HCT116 (cell line): ENCODE measurements at regions of chr3 and their contacts with region 1.

Region 1: DNA sequence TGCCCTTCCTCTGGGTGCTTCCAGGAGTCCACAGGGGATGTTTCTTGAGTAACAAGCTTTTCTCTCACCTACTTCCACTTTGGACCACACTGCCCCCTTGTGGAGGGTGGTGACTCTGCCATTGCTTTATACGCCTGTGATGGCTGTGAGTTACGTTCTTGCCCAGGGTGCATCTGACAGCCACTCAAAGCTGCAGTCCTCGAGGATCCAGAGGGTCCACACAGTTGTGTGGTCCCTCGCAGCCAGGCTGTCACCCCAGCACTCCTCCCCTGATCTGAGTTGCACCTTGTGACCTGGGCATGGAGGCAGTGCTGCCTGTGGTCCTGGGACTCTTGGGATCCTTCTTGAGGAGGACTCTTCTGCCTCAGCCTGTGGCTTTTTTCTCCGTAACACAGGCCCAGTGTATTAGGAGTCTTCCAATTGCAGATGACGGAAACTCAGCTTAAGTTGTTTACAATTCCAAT is 23.4 kb downstream of the FOXL2 start:
- DNase-seq: peak; percentile 82
- ATAC-seq: peak; percentile 83
- H3K4me3 ChIP-seq: 0 out of 4 replicates have a peak overlapping the region, but pooled peaks of 1 of the 2 experiments have one; percentile 25
- H3K27ac ChIP-seq: no peak overlapping the region
- H3K4me1 ChIP-seq: peaks cover 16 to 20% of the 10 kb centered on the region in 2 experiments
- H3K27me3 ChIP-seq: no peaks in the 10 kb centered on the region
- CTCF ChIP-seq: peak in 2 of 3 experiments; percentile 93 to 94; a peak in 4 of 6 replicates
- POLR2A ChIP-seq: no peak
- RAD21 ChIP-seq: no peak

Region 2: GRCh38 chr3:138417559-138417982 is 506.0 kb before region 1 on chr3:
- CTCF ChIA-PET with region 1: interaction called, 15 read pairs
- POLR2A ChIA-PET with region 1: no interaction called
- RAD21 ChIA-PET with region 1: no interaction called
- intact Hi-C with region 1: loop called (anchors 1 kb)
- DNase-seq: peak; percentile 77
- ATAC-seq: peak; percentile 99
- H3K4me3 ChIP-seq: no peak overlapping the region
- H3K27ac ChIP-seq: no peak overlapping the region
- H3K4me1 ChIP-seq: peaks cover 0 to 4% of the 10 kb centered on the region in 2 experiments; a peak in 1 of 4 replicates
- H3K27me3 ChIP-seq: no peaks in the 10 kb centered on the region
- CTCF ChIP-seq: peak; percentile 90 to 98 (median 98)
- POLR2A ChIP-seq: no peak
- RAD21 ChIP-seq: peak; percentile 89

Region 3: GRCh38 chr3:138479438-138479863 is 444.1 kb before region 1 on chr3:
- CTCF ChIA-PET with region 1: interaction called, 32 read pairs
- POLR2A ChIA-PET with region 1: no interaction called
- RAD21 ChIA-PET with region 1: interaction called in 1 of 2 experiments, 4 read pairs
- intact Hi-C with region 1: loop called (anchors 2 kb)
- DNase-seq: peak; percentile 35
- ATAC-seq: peak; percentile 87
- H3K4me3 ChIP-seq: no peak overlapping the region
- H3K27ac ChIP-seq: no peak overlapping the region
- H3K4me1 ChIP-seq: no peaks in the 10 kb centered on the region
- H3K27me3 ChIP-seq: no peaks in the 10 kb centered on the region
- CTCF ChIP-seq: peak; percentile 65 to 97 (median 91); a peak in 5 of 6 replicates
- POLR2A ChIP-seq: no peak
- RAD21 ChIP-seq: peak; percentile 80

Region 4: GRCh38 chr3:138694287-138695007 is 229.1 kb before region 1 on chr3:
- CTCF ChIA-PET with region 1: interaction called, 24 read pairs
- POLR2A ChIA-PET with region 1: no interaction called
- RAD21 ChIA-PET with region 1: interaction called, 3 to 6 read pairs
- intact Hi-C with region 1: loop called (anchors 2 kb)
- DNase-seq: peak; percentile 47
- ATAC-seq: peak; percentile 84
- H3K4me3 ChIP-seq: no peak overlapping the region
- H3K27ac ChIP-seq: peak overlapping the region; percentile 44; the same call in 1 of the 2 replicates
- H3K4me1 ChIP-seq: peaks cover 13 to 14% of the 10 kb centered on the region in 2 experiments
- H3K27me3 ChIP-seq: no peaks in the 10 kb centered on the region
- CTCF ChIP-seq: no peak
- POLR2A ChIP-seq: no peak
- RAD21 ChIP-seq: no peak

Region 5: DNA sequence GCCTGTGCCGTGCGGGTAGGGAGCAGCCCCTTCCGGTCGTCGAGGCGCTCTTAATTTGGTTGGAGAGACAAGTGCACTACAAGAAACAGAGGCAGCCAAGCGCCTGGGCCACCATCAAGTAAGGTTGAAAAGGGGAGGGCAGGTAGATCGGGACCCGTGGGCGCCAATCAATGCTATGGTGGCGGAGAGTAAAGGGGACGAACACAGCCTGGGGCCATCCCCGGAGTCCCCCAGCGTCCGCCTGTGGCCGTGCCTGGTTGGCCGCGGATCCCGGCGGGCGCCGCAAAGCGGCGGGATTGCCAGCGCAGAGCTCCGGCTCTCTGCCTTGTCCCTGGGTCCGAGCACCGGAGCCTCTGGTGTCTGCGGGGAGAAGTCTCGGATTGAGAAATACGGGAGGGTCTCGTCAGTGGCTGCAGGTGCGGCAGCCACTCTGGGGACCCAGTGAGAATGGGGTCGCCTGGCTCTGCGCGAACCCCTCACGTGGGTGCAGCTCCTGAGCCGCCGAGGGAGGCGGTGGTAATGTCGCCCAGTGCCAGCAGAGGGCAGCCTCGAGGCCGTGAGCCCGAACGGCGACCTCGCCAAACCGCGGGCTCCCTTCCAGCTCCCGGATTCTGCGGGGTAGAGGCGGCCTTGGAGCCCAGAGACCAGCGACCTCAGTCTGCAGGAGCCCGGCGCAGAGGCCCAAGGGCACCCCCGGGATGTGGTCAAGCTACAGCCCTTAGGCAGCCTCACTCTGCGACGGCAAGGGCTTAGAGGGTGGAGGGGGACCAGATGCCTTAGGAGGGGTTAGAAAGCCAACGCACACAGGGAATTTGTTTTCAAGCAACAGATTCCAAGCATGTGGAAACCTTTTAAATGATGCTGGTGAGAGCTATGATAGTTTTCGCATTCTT is 12.5 kb after region 1 on chr3:
- CTCF ChIA-PET with region 1: interaction called, 82 read pairs
- POLR2A ChIA-PET with region 1: interaction called, 3 read pairs
- RAD21 ChIA-PET with region 1: interaction called in 1 of 2 experiments, 3 read pairs
- intact Hi-C with region 1: no loop called
- DNase-seq: peak; percentile 52
- ATAC-seq: peak; percentile 88
- H3K4me3 ChIP-seq: peak overlapping the region; percentile 43 to 68
- H3K27ac ChIP-seq: peak overlapping the region; percentile 21
- H3K4me1 ChIP-seq: peaks cover 6 to 18% of the 10 kb centered on the region in 2 experiments; a peak in 3 of 4 replicates
- H3K27me3 ChIP-seq: no peaks in the 10 kb centered on the region
- CTCF ChIP-seq: peak; percentile 70 to 91 (median 76)
- POLR2A ChIP-seq: no peak
- RAD21 ChIP-seq: peak; percentile 61

Region 6: DNA sequence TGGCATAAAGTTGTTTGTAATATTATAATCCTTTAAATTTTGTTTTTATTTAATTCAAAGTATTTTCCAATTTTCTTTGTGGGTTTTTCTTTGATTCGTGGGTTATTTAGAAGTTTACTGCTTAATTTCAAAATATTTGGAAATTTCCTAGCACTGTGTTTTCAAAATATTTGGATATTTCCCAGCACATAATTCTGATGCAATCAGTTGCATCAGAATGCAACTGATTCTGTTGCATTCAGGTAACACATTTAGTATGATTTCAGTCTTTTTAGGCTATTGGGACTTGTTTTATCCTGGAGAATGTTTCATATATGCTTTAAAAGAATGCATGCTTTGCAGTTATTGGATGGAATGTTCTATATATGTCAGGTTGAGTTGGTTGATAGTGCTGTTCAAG is 139.4 kb after region 1 on chr3:
- CTCF ChIA-PET with region 1: no interaction called
- POLR2A ChIA-PET with region 1: no interaction called
- RAD21 ChIA-PET with region 1: no interaction called
- intact Hi-C with region 1: no loop called
- DNase-seq: no peak
- ATAC-seq: no peak
- H3K4me3 ChIP-seq: no peak overlapping the region
- H3K27ac ChIP-seq: no peak overlapping the region
- H3K4me1 ChIP-seq: no peaks in the 10 kb centered on the region
- H3K27me3 ChIP-seq: no peaks in the 10 kb centered on the region
- CTCF ChIP-seq: no peak
- POLR2A ChIP-seq: no peak
- RAD21 ChIP-seq: no peak